ENCODE measurements at regions of chr3 and their contacts with region 1.

Region 1: DNA sequence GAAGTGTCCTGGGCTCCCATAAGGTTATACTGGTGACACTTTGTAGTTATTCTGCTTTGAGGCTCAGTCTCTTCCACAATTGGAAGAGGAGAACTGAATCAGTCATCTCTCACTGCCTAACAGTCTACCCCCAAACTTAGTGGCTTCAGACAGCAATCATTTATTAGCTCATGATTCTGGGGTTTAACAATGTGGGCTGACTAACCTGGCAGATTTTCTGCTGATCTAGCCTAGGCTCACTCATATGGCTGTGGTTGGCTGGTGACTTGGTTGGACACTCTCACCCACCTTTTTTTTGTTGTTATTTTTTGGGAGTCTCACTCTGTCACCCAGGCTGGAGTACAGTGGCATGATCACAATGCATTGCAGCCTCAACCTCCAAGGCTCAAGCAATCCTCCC is 7.1 kb downstream of the GPD1L start:
- DNase-seq: no peak
- H3K4me3 ChIP-seq: no peak overlapping the region
- H3K27ac ChIP-seq: no peak overlapping the region
- H3K4me1 ChIP-seq: peaks cover 37% of the 10 kb centered on the region
- H3K27me3 ChIP-seq: no peaks in the 10 kb centered on the region
- CTCF ChIP-seq: no peak

Region 2: GRCh38 chr3:31873254-31873820 is 240.2 kb before region 1 on chr3:
- CTCF ChIA-PET with region 1: no interaction called
- POLR2A ChIA-PET with region 1: interaction called, 11 read pairs
- intact Hi-C with region 1: no loop called
- DNase-seq: no peak
- H3K4me3 ChIP-seq: no peak overlapping the region
- H3K27ac ChIP-seq: no peak overlapping the region
- H3K4me1 ChIP-seq: no peaks in the 10 kb centered on the region
- H3K27me3 ChIP-seq: no peaks in the 10 kb centered on the region
- CTCF ChIP-seq: no peak

Region 3: DNA sequence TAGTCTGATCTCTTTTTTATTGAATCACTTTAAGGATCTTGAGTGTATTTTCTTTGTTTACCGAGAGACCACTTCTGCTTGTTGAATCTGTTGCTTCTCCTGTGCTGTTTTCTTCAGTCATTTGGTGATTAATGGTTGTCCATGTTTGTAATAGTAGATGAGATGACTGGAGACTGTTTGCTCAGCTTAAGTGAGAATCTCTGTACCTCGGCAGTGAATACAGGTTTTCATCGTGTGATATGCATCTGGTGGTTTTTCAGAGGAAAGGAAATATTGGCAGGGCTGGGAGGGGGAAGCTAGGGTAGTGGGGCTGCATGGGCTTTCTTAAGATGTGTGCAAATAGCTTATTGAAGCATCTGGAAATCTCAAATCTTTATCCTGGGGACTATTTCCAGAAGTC is 144.1 kb after region 1 on chr3:
- CTCF ChIA-PET with region 1: no interaction called
- POLR2A ChIA-PET with region 1: no interaction called
- intact Hi-C with region 1: no loop called
- DNase-seq: peak in 1 of 2 experiments; percentile 40
- H3K4me3 ChIP-seq: no peak overlapping the region
- H3K27ac ChIP-seq: no peak overlapping the region
- H3K4me1 ChIP-seq: no peaks in the 10 kb centered on the region
- H3K27me3 ChIP-seq: no peaks in the 10 kb centered on the region
- CTCF ChIP-seq: no peak

Measured in PC-9 (cell line).